AG04449 (cell line): ENCODE measurements at regions of chrX and their contacts with region 1.

Region 1: DNA sequence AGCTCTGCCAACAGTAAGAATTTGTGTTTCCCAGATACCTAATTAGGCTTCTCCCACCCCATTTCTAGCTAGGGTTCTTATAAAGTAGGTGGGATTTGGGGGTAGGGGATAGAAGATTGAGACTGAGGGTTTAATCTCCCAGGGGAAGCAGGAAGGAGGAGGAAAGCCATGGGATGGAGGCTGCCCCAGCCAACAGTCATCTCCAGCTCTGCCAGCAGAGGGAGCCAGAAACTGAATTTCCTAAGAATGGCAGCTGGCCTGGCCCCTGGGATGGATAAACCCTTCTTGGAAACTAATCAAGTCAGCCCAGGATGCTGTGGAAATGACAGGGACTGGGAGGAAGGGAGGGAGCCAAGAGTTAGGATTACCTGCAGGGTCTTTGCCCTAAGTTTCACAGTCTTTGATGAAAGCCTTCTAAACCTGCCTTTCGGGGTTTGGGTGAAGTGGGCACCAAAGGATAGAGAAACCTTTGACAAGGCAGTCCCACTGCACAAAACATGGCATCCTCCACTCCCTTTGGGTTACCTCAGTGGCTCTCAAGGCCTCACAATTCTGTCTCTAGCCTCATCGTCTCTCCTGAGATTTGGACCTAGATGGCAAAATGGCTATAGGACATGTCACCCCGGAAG is 6.7 kb upstream of the ERCC6L start:
- DNase-seq: no peak
- H3K4me3 ChIP-seq: no peak overlapping the region
- CTCF ChIP-seq: peak; percentile 76

Region 2: GRCh38 chrX:72041871-72042851 is 203.4 kb before region 1 on chrX:
- CTCF ChIA-PET with region 1: no interaction called
- POLR2A ChIA-PET with region 1: no interaction called
- DNase-seq: no peak
- H3K4me3 ChIP-seq: no peak overlapping the region
- CTCF ChIP-seq: no peak

Region 3: DNA sequence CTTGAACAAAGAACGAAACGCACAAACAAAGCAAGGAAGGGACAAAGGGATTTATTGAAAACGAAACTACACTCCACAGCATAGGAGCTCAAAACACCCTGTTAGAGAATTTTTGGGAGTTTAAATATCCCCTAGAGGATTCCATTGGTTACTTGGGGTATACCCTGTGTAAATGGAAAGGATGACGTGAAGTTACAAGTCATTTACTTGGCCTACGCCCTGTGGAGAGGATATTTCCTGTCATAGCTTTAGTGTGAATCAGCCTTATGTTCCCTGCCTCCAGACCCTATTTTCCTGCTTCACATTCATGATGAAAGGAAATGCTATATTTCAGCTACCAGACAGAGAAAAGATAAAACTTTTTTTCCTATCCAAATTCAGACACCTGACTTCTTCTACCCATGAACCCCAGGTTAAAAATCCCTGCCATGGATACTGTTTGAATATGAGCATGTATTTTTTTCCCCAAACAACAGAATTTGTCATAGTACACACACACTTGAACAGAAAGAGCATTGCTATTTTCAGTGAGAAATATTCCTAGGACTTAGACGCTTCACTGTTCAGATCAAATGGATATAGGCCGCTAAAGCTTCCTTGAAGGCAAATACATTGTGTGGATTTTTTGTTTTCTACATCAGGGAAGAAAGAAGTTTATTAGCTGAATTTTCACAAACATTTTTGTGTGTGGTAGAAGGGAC is 43.6 kb before region 1 on chrX:
- CTCF ChIA-PET with region 1: no interaction called
- POLR2A ChIA-PET with region 1: no interaction called
- DNase-seq: peak; percentile 12
- H3K4me3 ChIP-seq: no peak overlapping the region
- CTCF ChIP-seq: no peak

Region 4: GRCh38 chrX:72269671-72270251 is 24.2 kb after region 1 on chrX:
- CTCF ChIA-PET with region 1: interaction called, 15 read pairs
- POLR2A ChIA-PET with region 1: no interaction called
- DNase-seq: no peak
- H3K4me3 ChIP-seq: no peak overlapping the region
- CTCF ChIP-seq: no peak

Region 5: DNA sequence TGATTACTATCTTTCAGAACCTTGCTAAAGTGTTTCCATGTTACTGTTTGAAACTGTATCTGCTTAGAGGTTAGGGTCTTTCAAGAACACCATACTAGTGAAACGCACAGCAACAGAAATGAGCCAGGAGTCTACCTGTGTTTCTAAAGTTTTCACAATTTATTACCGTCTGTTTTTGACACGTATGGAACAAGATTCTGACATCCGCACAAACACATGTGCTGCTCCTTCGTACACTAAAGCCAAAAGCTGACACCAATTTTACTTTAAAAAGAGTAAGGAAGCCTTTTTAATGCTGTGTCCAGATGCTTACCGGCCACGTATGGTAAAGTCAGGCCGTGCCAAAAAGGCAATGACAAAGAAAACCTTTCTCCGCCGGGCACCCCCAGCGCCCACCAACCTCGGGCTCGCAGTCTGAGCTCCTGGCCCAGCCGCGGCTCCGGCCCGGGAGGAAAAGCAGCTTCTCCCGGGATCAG is 30.9 kb after region 1 on chrX:
- CTCF ChIA-PET with region 1: interaction called, 31 read pairs
- POLR2A ChIA-PET with region 1: interaction called, 6 read pairs
- DNase-seq: no peak
- H3K4me3 ChIP-seq: peak overlapping the region; percentile 73
- CTCF ChIP-seq: no peak

Region 6: DNA sequence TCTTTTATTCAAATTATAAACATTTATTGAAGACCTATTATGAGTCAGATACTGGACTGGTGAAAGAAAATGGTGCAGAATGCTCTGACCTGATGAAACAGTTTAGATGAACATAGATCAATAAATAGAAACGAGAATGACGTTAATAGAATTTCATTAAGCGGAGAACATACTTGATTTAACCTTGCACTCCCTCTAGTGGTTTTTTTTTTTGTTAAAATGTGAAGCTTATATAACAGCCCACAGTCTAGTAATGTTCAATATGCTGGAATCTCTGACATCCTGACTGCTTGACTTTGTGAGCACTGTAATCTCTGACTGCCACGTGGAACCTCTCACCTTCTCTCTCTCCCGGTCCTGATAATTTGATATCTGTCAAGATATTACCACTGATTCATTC is 294.7 kb after region 1 on chrX:
- CTCF ChIA-PET with region 1: interaction called, 20 read pairs
- POLR2A ChIA-PET with region 1: no interaction called
- DNase-seq: no peak
- H3K4me3 ChIP-seq: no peak overlapping the region
- CTCF ChIP-seq: no peak